ENCODE measurements at regions of chr12 and their contacts with region 1.

Region 1: DNA sequence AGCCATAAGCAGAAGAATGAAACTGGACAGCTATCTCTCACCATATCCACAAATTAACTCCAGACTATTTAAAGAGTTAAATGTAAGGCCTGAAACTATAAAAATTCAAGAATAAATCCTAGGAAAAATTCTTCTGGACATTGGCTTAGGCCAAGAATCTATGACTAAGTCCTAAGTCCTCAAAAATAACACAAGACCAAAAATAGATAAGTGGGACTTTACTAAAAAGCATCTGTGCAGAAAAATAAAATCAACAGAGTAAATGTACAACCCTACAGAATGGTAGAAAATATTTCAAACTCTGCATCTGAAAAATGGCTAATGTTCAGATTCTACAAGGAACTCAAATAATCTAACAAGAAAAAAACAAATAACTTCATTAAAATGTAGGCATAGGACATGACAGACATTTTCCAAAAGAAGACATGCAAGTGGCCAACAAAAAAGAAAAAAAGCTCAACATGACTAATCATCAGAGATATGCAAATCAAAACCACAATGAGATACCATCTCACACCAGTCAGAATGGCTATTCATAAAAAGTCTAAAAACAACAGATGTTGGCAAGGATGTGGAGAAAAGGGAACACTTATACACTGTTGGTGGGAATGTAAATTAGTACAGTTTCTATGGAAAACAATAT is 61.0 kb upstream of the PPFIA2 start:
- DNase-seq: no peak
- ATAC-seq: no peak
- H3K4me3 ChIP-seq: no peak overlapping the region
- H3K27ac ChIP-seq: no peak overlapping the region
- H3K4me1 ChIP-seq: no peaks in the 10 kb centered on the region
- H3K27me3 ChIP-seq: no peaks in the 10 kb centered on the region
- CTCF ChIP-seq: no peak
- EP300 ChIP-seq: no peak
- POLR2A ChIP-seq: no peak
- RAD21 ChIP-seq: no peak

Region 2: GRCh38 chr12:81835783-81836182 is 15.7 kb after region 1 on chr12:
- CTCF ChIA-PET with region 1: no interaction called
- POLR2A ChIA-PET with region 1: no interaction called
- in situ Hi-C with region 1: no loop called
- intact Hi-C with region 1: loop called (anchors 2 kb)
- DNase-seq: no peak
- ATAC-seq: no peak
- H3K4me3 ChIP-seq: no peak overlapping the region
- H3K27ac ChIP-seq: no peak overlapping the region
- H3K4me1 ChIP-seq: no peaks in the 10 kb centered on the region
- H3K27me3 ChIP-seq: no peaks in the 10 kb centered on the region
- CTCF ChIP-seq: no peak
- EP300 ChIP-seq: no peak
- POLR2A ChIP-seq: no peak
- RAD21 ChIP-seq: no peak